Lower leg skin (tissue), 4 donors: ENCODE measurements at regions of chr11 and their contacts with region 1.

Region 1: GRCh38 chr11:14148653-14149273 is 186.2 kb downstream of the SPON1 start:
- DNase-seq: no peak
- H3K4me3 ChIP-seq: no peak overlapping the region
- CTCF ChIP-seq: no peak
- POLR2A ChIP-seq: no peak

Region 2: DNA sequence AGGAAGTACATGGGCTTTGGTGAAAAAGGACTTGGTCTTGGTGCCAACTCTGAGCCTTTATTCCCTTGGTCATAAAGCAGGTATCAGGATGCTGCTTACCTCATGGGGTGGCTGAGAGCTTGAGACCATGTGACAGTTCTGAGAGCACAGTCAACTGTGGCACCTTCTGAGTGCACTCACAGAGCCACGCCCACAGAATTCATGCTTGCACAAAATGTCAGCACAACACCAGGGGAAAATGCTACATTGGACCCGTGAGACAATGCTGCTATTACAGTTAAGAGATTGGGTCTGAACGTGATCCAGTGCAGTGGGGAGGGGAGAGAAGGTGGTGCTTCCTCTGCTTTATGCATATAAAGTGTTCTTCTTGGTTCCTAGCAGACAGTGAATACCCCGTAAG is 265.7 kb before region 1 on chr11:
- intact Hi-C with region 1: no loop called
- DNase-seq: no peak
- H3K4me3 ChIP-seq: no peak overlapping the region
- CTCF ChIP-seq: no peak
- POLR2A ChIP-seq: no peak

Region 3: DNA sequence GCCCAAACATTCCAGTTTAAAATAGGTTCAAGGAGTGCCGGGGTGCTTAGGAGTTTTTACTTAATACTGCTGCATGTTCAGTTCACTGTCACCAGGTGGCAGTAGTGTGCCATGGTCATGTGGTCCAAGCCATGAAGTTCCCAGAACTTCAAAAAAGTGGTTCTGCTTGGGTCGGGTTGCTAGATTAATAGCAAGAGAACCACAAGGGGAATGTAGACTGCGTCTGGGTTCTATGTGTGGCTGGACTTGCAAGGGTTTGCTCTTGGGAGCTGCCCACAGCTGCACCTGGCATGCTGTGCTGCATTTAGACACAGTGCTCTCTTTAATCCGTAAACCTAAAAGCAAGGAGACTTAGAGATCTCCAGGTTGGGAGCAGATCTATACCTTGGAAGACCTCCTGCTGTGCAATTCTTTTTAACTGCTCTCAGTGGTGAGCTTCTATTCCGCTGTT is 192.8 kb before region 1 on chr11:
- intact Hi-C with region 1: loop called (anchors 10 kb)
- DNase-seq: peak in 1 of 2 donors; percentile 45
- H3K4me3 ChIP-seq: no peak overlapping the region
- CTCF ChIP-seq: peak in 1 of 3 donors; percentile 32
- POLR2A ChIP-seq: no peak

Region 4: DNA sequence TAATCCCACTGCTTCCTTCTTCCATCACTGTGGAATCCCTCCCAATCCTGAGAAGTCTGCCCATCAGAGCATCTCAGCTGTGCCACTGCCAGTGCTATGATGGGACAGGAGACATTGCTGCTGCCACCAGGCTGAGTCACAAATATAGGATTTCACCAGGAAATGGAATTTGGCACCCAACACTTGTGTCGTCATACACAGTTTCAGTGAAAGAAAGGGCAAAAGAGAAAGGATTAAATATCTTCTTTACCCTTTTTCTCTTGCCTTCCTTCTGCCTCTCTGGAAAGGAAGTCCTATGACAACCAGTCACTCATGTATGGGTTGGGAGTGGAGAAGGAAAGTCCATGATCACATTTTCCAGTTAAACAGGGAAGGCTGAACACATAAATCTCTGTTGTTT is 52.9 kb before region 1 on chr11:
- intact Hi-C with region 1: no loop called
- DNase-seq: no peak
- H3K4me3 ChIP-seq: no peak overlapping the region
- CTCF ChIP-seq: no peak
- POLR2A ChIP-seq: no peak